ENCODE measurements at regions of chr6 and their contacts with region 1.

Region 1: GRCh38 chr6:116100419-116101301 is at the start of gene NT5DC1:
- DNase-seq: peak; percentile 58 to 91
- H3K4me3 ChIP-seq: peak within 1 kb of the TSS; percentile 84 to 85
- H3K27ac ChIP-seq: peak within 1 kb of the TSS; percentile 94 to 98
- H3K4me1 ChIP-seq: peaks cover 9 to 33% of the 10 kb centered on the region in 2 donors
- H3K27me3 ChIP-seq: no peaks in the 10 kb centered on the region
- CTCF ChIP-seq: peak in 2 of 3 experiments; percentile 34 to 47
- total RNA-seq, gene NT5DC1: 4.6 TPM

Region 2: GRCh38 chr6:115932481-115932880 is 168.2 kb before region 1 on chr6:
- intact Hi-C with region 1: loop called (anchors 10 kb)
- DNase-seq: no peak
- H3K4me3 ChIP-seq: no peak overlapping the region
- H3K27ac ChIP-seq: peak overlapping the region; percentile 82 to 89
- H3K4me1 ChIP-seq: peaks cover 8 to 11% of the 10 kb centered on the region in 2 donors
- H3K27me3 ChIP-seq: no peaks in the 10 kb centered on the region
- CTCF ChIP-seq: no peak

Region 3: DNA sequence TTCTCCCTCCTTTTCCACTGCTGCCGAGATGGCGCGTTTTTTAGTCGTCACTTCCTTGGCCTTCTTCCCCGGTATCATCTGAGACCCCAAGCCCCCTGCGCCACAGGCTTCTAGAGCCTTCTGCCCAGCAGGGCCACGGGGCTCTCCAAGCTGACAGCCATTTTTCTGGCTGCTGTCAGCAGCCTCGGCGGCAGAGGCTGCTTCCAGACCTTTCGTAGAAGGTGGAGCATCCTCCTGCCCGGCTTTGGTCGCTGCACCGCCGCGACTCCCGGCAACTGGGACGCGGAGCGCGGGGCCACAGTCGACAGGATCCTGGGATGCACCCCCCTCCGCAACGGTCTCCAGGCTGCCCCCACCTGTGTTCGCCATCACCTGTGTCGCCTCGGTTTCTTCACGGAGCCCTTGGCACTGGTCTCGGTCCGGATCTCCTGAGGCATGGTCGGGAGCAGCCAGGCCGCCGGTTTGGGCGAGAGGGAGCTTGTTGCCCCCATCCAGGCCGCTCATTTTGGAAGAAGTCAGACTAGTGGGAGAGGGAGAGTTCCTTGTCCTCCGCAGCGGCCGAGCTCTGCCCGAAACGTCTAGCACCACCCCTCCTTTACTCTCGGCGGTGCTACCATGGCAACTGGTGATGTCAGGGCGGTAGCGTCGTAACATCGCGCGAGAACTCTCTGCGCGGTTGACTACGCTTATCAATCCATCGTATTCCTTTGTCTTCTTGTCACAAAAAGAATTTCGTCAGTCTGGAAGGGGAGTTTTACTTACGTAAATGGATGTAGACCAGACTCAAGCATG is 153.0 kb after region 1 on chr6 and contains the start of gene TSPYL4:
- intact Hi-C with region 1: loop called (anchors 2 kb)
- DNase-seq: peak; percentile 75 to 97
- H3K4me3 ChIP-seq: peak within 1 kb of the TSS; percentile 66 to 90
- H3K27ac ChIP-seq: peak within 1 kb of the TSS; percentile 83 to 92
- H3K4me1 ChIP-seq: peaks cover 11 to 26% of the 10 kb centered on the region in 2 donors
- H3K27me3 ChIP-seq: no peaks in the 10 kb centered on the region
- CTCF ChIP-seq: no peak
- total RNA-seq, gene TSPYL4: 8.8 TPM

Measured in ascending aorta (tissue), 2 donors.